Left colon (tissue), 2 donors: ENCODE measurements at regions of chr15 and their contacts with region 1.

Region 1: DNA sequence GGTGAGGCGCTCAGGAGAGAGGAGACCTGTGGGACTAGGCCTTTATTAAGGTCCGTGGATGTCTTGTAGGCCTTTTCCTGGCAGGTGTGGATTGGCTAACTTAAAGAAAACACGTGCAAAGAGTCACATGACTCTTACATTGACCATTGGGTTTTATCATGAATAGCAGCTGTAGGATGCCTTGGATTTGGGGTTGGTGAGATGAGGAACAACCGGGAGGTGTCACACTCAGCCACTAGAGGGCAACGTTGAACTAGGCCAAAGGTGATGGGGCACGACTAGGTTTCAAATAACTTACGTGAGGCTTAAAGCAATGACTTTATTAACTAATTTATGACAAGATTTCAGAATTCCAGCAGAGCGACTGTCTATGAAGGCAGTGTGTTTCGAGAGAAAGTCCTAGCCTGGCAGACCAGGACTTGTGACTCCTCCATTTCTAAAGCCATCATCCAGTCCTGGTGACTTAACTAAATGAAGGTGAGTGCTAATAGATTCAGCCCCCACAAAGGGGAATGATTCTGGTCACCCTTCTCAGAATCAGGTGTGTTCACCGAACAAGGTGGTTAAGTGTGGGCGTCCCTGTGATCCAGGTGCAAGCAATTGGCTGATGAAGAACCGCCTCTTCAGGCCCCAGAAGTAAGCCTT is 345.6 kb downstream of the MCTP2 start:
- DNase-seq: peak in 1 of 2 donors; percentile 18
- ATAC-seq: no peak

Region 2: GRCh38 chr15:94653071-94653470 is 76.1 kb after region 1 on chr15:
- intact Hi-C with region 1: loop called in 1 of 2 experiments (anchors 5 kb)
- DNase-seq: no peak
- ATAC-seq: no peak

Region 3: DNA sequence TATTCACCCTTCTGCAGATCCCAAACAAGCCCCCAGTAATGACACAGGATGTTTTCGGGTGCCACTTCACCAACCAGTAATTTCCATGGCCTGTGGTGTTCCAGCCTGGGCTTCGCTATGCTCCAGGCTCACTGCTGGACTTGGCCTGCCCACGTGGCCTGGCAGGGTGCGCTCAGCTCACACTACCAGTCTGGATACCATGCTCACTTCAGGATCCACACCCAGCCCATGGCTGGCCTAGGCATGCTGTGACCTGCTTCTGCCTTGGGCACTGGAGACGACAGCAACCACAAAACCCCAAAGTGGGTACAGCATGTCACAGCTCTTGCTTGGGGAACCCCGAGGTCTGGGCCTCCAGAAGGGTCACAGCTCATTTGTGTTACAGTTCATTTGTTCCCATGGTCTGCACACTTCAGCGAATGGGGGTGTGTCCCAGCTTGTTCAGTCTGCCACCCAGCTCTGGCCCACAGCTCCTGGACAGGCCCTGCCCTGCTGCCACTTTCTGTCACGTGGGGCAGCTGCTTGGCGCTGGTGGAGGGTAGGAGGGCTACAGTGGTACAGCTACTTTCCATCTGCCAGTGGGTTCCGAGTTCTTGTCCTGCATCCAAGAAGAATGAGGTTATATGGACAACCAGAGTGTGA is 305.2 kb after region 1 on chr15:
- intact Hi-C with region 1: no loop called
- DNase-seq: no peak
- ATAC-seq: no peak